Caco-2 (cell line): ENCODE measurements at regions of chr19 and their contacts with region 1.

Region 1: GRCh38 chr19:2950286-2951124 is 5.7 kb upstream of the ZNF77 start:
- DNase-seq: peak; percentile 99
- H3K4me3 ChIP-seq: peak overlapping the region; percentile 68
- H3K4me3 Mint-ChIP-seq: peak overlapping the region; percentile 97
- H3K27ac Mint-ChIP-seq: peak overlapping the region; percentile 97
- H3K4me1 ChIP-seq: peaks cover 14% of the 10 kb centered on the region
- H3K4me1 Mint-ChIP-seq: peaks cover 16% of the 10 kb centered on the region
- H3K27me3 ChIP-seq: no peaks in the 10 kb centered on the region
- H3K27me3 Mint-ChIP-seq: no peaks in the 10 kb centered on the region
- CTCF ChIP-seq: no peak

Region 2: DNA sequence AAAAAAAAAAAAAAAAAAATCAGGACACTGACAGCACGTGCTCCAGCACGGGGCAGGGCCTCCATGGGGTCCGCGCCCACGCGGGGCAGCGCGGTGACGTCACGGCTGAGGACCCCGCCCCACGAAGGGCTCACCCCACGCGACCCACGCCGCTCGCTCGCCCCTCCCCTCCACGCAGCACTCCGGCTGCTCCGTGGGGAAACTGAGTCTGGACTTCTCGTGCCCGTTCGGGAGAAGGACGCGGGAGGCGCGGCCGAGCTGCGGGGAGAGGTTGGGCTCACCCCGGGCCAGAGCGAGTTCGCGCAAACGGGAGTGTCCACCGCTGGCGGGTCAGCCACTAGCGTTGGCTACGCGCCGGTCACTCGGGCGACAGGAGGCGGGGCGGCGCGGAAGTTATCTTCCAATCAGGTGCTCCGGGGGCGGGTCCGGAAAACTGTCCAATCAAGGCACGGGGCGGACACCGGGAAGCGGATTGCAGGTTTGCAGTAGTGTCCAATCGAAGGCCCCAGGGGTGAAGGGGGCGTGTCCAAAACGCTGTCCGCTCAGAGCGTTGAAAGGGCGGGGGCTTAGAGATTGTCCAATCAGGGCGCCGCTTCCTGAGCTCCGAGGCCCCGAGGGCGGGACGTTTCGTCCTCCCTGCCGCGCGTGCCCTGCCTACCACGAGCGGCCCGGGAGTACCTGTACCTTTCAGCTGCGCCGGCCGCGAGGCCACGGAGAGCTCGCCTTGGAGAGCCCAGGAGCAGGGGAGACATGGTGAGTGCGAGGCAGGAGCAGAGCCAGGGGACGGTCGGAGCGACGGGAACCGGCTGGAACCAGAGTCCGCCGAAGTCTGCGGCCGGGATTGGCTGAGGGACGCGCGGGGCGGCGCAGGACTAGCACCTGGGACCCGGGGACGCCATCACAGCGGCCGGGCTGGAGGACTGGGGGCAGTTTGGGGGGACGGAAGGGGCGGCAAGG is 49.9 kb before region 1 on chr19 and contains the start of gene ZNF57:
- CTCF ChIA-PET with region 1: interaction called, 12 read pairs
- POLR2A ChIA-PET with region 1: interaction called, 24 read pairs
- intact Hi-C with region 1: loop called (anchors 2 kb)
- DNase-seq: peak; percentile 99
- H3K4me3 ChIP-seq: peak within 1 kb of the TSS; percentile 99
- H3K4me3 Mint-ChIP-seq: peak within 1 kb of the TSS; percentile 98
- H3K27ac Mint-ChIP-seq: peak within 1 kb of the TSS; percentile 96
- H3K4me1 ChIP-seq: peaks cover 4% of the 10 kb centered on the region; the same call in 1 of the 2 replicates
- H3K4me1 Mint-ChIP-seq: no peaks in the 10 kb centered on the region
- H3K27me3 ChIP-seq: no peaks in the 10 kb centered on the region
- H3K27me3 Mint-ChIP-seq: no peaks in the 10 kb centered on the region
- CTCF ChIP-seq: no peak
- total RNA-seq, gene ZNF57: 5.8 and 7.6 TPM in 2 replicates

Region 3: GRCh38 chr19:2977001-2977685 is 26.6 kb after region 1 on chr19 and contains the start of gene TLE6:
- CTCF ChIA-PET with region 1: interaction called, 10 read pairs
- POLR2A ChIA-PET with region 1: interaction called, 13 read pairs
- intact Hi-C with region 1: loop called (anchors 1 kb)
- DNase-seq: peak; percentile 97
- H3K4me3 ChIP-seq: peak within 1 kb of the TSS; percentile 52
- H3K4me3 Mint-ChIP-seq: peak within 1 kb of the TSS; percentile 85
- H3K27ac Mint-ChIP-seq: peak within 1 kb of the TSS; percentile 72
- H3K4me1 ChIP-seq: peaks cover 16% of the 10 kb centered on the region; the same call in 1 of the 2 replicates
- H3K4me1 Mint-ChIP-seq: no peaks in the 10 kb centered on the region
- H3K27me3 ChIP-seq: no peaks in the 10 kb centered on the region
- H3K27me3 Mint-ChIP-seq: no peaks in the 10 kb centered on the region
- CTCF ChIP-seq: no peak
- total RNA-seq, gene TLE6: 1.4 and 1.9 TPM in 2 replicates

Region 4: DNA sequence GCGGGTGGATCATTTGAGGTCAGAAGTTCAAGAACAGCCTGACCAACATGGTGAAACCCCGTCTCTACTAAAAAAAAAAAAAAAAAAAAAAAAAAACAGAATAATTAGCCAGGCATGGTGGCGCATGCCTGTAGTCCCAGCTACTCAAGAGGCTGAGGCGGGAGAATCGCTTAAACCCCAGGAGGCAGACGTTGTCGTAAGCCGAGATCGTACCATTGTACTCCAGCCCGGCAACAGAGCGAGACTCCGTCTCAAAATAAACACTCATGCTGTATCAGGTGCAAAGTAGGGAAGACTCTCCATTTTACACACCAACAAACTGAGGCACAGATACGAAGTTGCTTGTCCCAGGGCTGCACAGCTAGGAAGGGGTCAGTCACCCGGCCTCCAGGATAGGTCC is 42.5 kb after region 1 on chr19:
- CTCF ChIA-PET with region 1: no interaction called
- POLR2A ChIA-PET with region 1: no interaction called
- intact Hi-C with region 1: no loop called
- DNase-seq: no peak
- H3K4me3 ChIP-seq: no peak overlapping the region
- H3K4me3 Mint-ChIP-seq: no peak overlapping the region
- H3K27ac Mint-ChIP-seq: no peak overlapping the region
- H3K4me1 ChIP-seq: no peaks in the 10 kb centered on the region
- H3K4me1 Mint-ChIP-seq: no peaks in the 10 kb centered on the region
- H3K27me3 ChIP-seq: no peaks in the 10 kb centered on the region
- H3K27me3 Mint-ChIP-seq: no peaks in the 10 kb centered on the region
- CTCF ChIP-seq: no peak

Region 5: GRCh38 chr19:3035542-3036118 is 85.1 kb after region 1 on chr19:
- CTCF ChIA-PET with region 1: interaction called, 16 read pairs
- POLR2A ChIA-PET with region 1: interaction called, 24 read pairs
- intact Hi-C with region 1: loop called (anchors 5 kb)
- DNase-seq: peak; percentile 98 to 99
- H3K4me3 ChIP-seq: peak overlapping the region; percentile 46
- H3K4me3 Mint-ChIP-seq: peak overlapping the region; percentile 90
- H3K27ac Mint-ChIP-seq: peak overlapping the region; percentile 94
- H3K4me1 ChIP-seq: peaks cover 26% of the 10 kb centered on the region
- H3K4me1 Mint-ChIP-seq: peaks cover 23% of the 10 kb centered on the region
- H3K27me3 ChIP-seq: no peaks in the 10 kb centered on the region
- H3K27me3 Mint-ChIP-seq: no peaks in the 10 kb centered on the region
- CTCF ChIP-seq: no peak

Region 6: DNA sequence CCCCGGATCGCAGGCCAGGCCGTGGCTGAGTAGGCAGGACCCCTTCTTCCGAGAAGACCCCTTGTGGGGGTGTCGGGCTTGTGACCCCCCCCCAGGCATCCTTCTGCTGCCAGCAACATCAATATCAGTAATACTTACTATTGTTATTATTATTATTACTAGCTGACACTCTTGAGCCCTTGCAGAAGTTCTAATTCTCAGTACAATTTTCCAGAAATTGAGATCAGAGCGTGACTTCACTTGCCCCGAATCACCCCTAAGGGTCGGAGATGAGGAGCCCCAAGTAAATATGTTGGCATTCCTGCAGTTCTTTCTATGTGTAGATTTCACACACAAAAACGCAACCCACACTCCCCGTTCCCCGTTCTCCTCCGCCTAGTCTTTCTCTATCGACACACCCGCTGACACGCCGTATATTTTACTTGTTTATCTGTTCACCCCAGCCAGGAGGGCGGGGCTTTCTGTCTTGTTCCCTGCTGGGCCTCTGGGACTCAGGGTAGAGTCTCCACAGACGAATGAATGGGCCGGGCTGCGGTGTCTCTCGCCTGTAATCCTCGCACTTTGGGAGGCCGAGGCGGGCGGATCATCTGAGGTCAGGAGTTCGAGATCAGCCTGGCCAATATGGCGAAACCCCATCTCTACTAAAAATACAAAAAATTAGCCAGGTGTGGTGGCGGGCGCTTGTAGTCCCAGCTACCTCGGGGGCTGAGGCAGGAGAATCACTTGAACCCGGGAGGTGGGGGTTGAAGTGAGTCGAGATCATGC is 97.1 kb after region 1 on chr19:
- CTCF ChIA-PET with region 1: no interaction called
- POLR2A ChIA-PET with region 1: no interaction called
- intact Hi-C with region 1: no loop called
- DNase-seq: peak; percentile 56 to 74
- H3K4me3 ChIP-seq: peak overlapping the region; percentile 33
- H3K4me3 Mint-ChIP-seq: peak overlapping the region; percentile 73
- H3K27ac Mint-ChIP-seq: no peak overlapping the region
- H3K4me1 ChIP-seq: no peaks in the 10 kb centered on the region
- H3K4me1 Mint-ChIP-seq: no peaks in the 10 kb centered on the region
- H3K27me3 ChIP-seq: no peaks in the 10 kb centered on the region
- H3K27me3 Mint-ChIP-seq: no peaks in the 10 kb centered on the region
- CTCF ChIP-seq: no peak

Region 7: GRCh38 chr19:3062168-3063102 is 111.9 kb after region 1 on chr19 and contains the start of gene TLE5:
- CTCF ChIA-PET with region 1: interaction called, 4 read pairs
- POLR2A ChIA-PET with region 1: no interaction called
- intact Hi-C with region 1: loop called (anchors 10 kb)
- DNase-seq: peak in 1 of 2 experiments; percentile 66
- H3K4me3 ChIP-seq: peak within 1 kb of the TSS; percentile 76
- H3K4me3 Mint-ChIP-seq: peak within 1 kb of the TSS; percentile 61
- H3K27ac Mint-ChIP-seq: peak within 1 kb of the TSS; percentile 38
- H3K4me1 ChIP-seq: peaks cover 5% of the 10 kb centered on the region
- H3K4me1 Mint-ChIP-seq: peaks cover 6% of the 10 kb centered on the region
- H3K27me3 ChIP-seq: no peaks in the 10 kb centered on the region
- H3K27me3 Mint-ChIP-seq: no peaks in the 10 kb centered on the region
- CTCF ChIP-seq: no peak
- total RNA-seq, gene TLE5: 132 and 144 TPM in 2 replicates

Region 8: GRCh38 chr19:3108775-3109174 is 158.3 kb after region 1 on chr19:
- CTCF ChIA-PET with region 1: interaction called, 10 read pairs
- POLR2A ChIA-PET with region 1: interaction called, 3 read pairs
- intact Hi-C with region 1: no loop called
- DNase-seq: peak; percentile 66 to 70
- H3K4me3 ChIP-seq: no peak overlapping the region
- H3K4me3 Mint-ChIP-seq: no peak overlapping the region
- H3K27ac Mint-ChIP-seq: peak overlapping the region; percentile 55
- H3K4me1 ChIP-seq: no peaks in the 10 kb centered on the region; the same call in 1 of the 2 replicates
- H3K4me1 Mint-ChIP-seq: no peaks in the 10 kb centered on the region
- H3K27me3 ChIP-seq: no peaks in the 10 kb centered on the region
- H3K27me3 Mint-ChIP-seq: no peaks in the 10 kb centered on the region
- CTCF ChIP-seq: peak; percentile 72 to 74